BJ (cell line): ENCODE measurements at regions of chr5 and their contacts with region 1.

Region 1: GRCh38 chr5:71475788-71476384 is 20.4 kb downstream of the BDP1 start:
- DNase-seq: no peak
- H3K4me3 ChIP-seq: no peak overlapping the region
- H3K27me3 ChIP-seq: no peaks in the 10 kb centered on the region
- CTCF ChIP-seq: peak; percentile 72

Region 2: GRCh38 chr5:71461360-71461759 is 14.5 kb before region 1 on chr5:
- CTCF ChIA-PET with region 1: interaction called, 19 read pairs
- POLR2A ChIA-PET with region 1: no interaction called
- DNase-seq: no peak
- H3K4me3 ChIP-seq: no peak overlapping the region
- H3K27me3 ChIP-seq: no peaks in the 10 kb centered on the region
- CTCF ChIP-seq: no peak

Region 3: GRCh38 chr5:71492817-71493615 is 17.1 kb after region 1 on chr5:
- CTCF ChIA-PET with region 1: interaction called, 24 read pairs
- POLR2A ChIA-PET with region 1: no interaction called
- DNase-seq: no peak
- H3K4me3 ChIP-seq: no peak overlapping the region
- H3K27me3 ChIP-seq: no peaks in the 10 kb centered on the region
- CTCF ChIP-seq: no peak

Region 4: GRCh38 chr5:71569748-71570509 is 94.0 kb after region 1 on chr5:
- CTCF ChIA-PET with region 1: no interaction called
- POLR2A ChIA-PET with region 1: no interaction called
- DNase-seq: no peak
- H3K4me3 ChIP-seq: no peak overlapping the region
- H3K27me3 ChIP-seq: no peaks in the 10 kb centered on the region
- CTCF ChIP-seq: no peak